Right lobe of liver (tissue), 6 donors: ENCODE measurements at regions of chrX and their contacts with region 1.

Region 1: GRCh38 chrX:2336181-2336580 is 164.6 kb downstream of the DHRSX start:
- DNase-seq: no peak
- ATAC-seq: no peak
- H3K4me3 ChIP-seq: no peak overlapping the region
- H3K27ac ChIP-seq: no peak overlapping the region
- H3K4me1 ChIP-seq: no peaks in the 10 kb centered on the region
- H3K27me3 ChIP-seq: no peaks in the 10 kb centered on the region
- CTCF ChIP-seq: no peak
- POLR2A ChIP-seq: no peak

Region 2: GRCh38 chrX:2376166-2376565 is 40.0 kb after region 1 on chrX:
- intact Hi-C with region 1: loop called in 1 of 2 experiments (anchors 5 kb)
- DNase-seq: no peak
- ATAC-seq: no peak
- H3K4me3 ChIP-seq: no peak overlapping the region
- H3K27ac ChIP-seq: no peak overlapping the region
- H3K4me1 ChIP-seq: peaks cover 0 to 3% (median 0%) of the 10 kb centered on the region in 4 donors
- H3K27me3 ChIP-seq: no peaks in the 10 kb centered on the region
- CTCF ChIP-seq: no peak
- POLR2A ChIP-seq: no peak